Activated CD8-positive, alpha-beta T cell treated with anti-CD3 and anti-CD28 coated beads, Interleukin-2, amount 10 ng/mL, durations not matched to agents 7 days and 5 days (primary cell): ENCODE measurements at regions of chr16 and their contacts with region 1.

Region 1: DNA sequence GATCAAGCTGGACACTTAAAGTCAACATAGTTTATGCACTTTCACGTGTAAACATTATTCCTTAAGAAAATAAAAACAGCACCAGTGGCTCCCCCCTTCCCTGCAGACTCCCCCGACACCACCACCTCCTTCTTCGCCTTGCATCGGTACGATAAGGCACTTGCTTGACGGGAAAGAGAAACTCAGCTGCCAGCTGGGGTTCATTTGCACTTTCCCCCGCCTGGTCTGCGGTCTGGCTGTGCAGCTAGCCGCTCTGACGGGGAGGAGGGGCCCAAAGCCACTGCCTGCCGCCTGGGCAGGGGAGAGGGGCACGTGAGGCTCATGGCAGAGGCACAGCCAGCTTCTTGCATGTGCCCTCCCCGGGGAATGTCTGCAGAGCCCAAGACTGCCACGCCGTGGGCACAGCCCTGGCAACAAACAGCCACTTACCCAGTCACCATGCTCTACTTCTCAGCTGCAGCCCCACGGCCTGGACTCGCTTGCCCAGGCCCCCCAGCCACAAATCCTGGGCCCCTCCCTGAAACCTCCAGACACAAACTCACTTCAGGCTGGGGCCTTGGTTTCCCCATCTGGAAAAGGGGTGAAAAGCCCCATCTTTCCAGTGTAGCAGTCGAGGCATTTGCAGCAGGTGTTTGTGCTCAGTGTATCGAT is 16.5 kb upstream of the PRM1 start:
- DNase-seq: peak; percentile 86
- ATAC-seq: peak; percentile 89
- H3K4me3 Mint-ChIP-seq: peak overlapping the region; percentile 60
- H3K27ac Mint-ChIP-seq: peak overlapping the region; percentile 78
- H3K4me1 Mint-ChIP-seq: peaks cover 64% of the 10 kb centered on the region
- H3K27me3 Mint-ChIP-seq: peaks cover 3% of the 10 kb centered on the region

Region 2: DNA sequence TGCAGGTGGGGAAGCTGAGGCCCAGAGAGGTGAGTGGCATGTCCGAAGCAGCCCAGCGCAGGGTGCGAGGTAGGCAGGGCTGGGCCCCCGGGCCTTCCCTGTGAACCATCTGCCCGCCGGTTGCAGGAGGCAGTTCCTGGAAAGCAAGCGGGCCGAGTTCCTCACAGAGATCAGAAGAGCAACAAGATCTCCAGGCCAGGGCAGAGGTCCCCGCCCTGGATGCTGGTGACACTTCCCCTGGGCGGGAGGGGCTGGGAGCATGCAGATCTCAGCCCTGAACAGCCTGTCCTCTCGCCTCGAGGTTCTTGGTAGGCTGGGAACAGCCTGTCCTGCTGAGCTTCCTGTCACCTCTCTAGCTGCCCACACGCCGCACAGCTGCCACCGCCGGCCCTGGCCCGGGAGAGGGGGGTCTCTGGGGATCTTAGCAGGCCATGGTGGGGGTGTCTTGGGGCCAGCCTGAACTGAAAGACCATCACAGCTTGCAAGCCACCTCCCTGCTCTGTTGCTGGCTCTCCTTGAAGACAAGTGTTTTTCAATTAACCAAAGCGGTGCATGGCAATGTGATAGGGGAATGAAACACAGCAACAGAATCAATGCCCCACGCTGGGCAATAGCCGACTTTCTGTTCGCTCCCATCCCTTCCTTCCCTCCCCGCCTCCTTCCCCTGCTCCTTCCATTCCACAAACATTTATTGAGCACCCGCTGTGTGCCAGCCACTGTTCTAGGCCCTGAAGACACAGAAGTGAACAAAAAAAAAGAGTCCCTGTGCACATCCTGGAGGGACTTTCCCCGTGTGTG is 73.3 kb before region 1 on chr16:
- CTCF ChIA-PET with region 1: no interaction called
- POLR2A ChIA-PET with region 1: no interaction called
- DNase-seq: peak; percentile 90
- ATAC-seq: peak; percentile 77
- H3K4me3 Mint-ChIP-seq: peak overlapping the region; percentile 80
- H3K27ac Mint-ChIP-seq: peak overlapping the region; percentile 99
- H3K4me1 Mint-ChIP-seq: peaks cover 82% of the 10 kb centered on the region
- H3K27me3 Mint-ChIP-seq: no peaks in the 10 kb centered on the region

Region 3: GRCh38 chr16:11312718-11313492 is 15.3 kb after region 1 on chr16:
- CTCF ChIA-PET with region 1: interaction called, 3 read pairs
- POLR2A ChIA-PET with region 1: interaction called, 12 read pairs
- DNase-seq: peak; percentile 63
- ATAC-seq: peak; percentile 29
- H3K4me3 Mint-ChIP-seq: peak overlapping the region; percentile 12
- H3K27ac Mint-ChIP-seq: peak overlapping the region; percentile 65
- H3K4me1 Mint-ChIP-seq: peaks cover 80% of the 10 kb centered on the region
- H3K27me3 Mint-ChIP-seq: no peaks in the 10 kb centered on the region

Region 4: GRCh38 chr16:11356573-11357331 is 59.1 kb after region 1 on chr16:
- CTCF ChIA-PET with region 1: interaction called, 11 read pairs
- POLR2A ChIA-PET with region 1: no interaction called
- DNase-seq: peak; percentile 68
- ATAC-seq: no peak
- H3K4me3 Mint-ChIP-seq: peak overlapping the region; percentile 76
- H3K27ac Mint-ChIP-seq: peak overlapping the region; percentile 65
- H3K4me1 Mint-ChIP-seq: peaks cover 91% of the 10 kb centered on the region
- H3K27me3 Mint-ChIP-seq: peaks cover 5% of the 10 kb centered on the region

Region 5: DNA sequence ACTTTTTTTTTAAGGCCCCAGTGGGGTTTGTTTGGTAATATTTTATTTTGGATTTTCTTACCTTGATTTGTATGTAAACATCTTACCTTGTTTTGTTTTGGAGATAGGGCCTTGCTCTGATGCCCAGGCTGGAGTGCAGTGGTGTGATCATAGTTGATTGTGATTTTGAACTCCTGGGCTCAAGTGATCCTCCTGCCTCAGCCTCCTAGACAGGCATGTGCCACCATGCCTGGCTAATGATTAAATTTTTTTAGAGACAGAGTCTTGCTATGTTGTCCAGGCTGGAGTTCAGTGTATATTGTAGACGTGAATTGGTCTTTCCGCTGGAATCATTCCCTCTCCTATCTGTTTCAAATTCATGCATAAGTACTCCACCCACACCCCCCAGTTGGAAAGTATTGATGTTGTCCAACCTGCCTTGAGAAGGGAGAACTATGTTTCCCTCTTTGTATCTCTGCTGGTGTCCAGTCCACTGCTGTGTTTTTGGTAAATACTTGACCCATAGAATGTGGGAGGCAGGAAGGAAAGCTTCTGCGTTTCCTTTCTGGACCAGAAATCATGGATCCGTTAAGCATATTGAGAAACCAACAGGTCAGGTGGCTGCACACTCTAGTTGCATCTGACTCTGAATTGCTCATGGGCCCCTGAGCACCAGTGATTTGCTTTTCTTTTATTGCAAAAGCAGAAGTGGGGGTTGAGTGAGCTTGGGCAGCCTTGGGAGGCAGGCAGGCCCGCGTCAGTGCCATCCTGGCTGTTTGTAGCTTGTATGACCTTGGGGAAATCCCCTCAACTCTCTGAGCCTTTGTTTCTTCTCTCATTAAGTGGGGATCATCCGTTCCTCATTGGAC is 72.7 kb after region 1 on chr16:
- CTCF ChIA-PET with region 1: interaction called, 11 read pairs
- POLR2A ChIA-PET with region 1: no interaction called
- DNase-seq: no peak
- ATAC-seq: no peak
- H3K4me3 Mint-ChIP-seq: no peak overlapping the region
- H3K27ac Mint-ChIP-seq: no peak overlapping the region
- H3K4me1 Mint-ChIP-seq: peaks cover 24% of the 10 kb centered on the region
- H3K27me3 Mint-ChIP-seq: no peaks in the 10 kb centered on the region